Psoas muscle (tissue), 8 donors: ENCODE measurements at regions of chr2 and their contacts with region 1.

Region 1: GRCh38 chr2:36355151-36355889 is at the start of gene CRIM1:
- DNase-seq: peak; percentile 90 to 95
- ATAC-seq: peak; percentile 71 to 83 (median 78)
- H3K4me3 ChIP-seq: peak within 1 kb of the TSS; percentile 95
- H3K27ac ChIP-seq: peak within 1 kb of the TSS; percentile 92
- H3K4me1 ChIP-seq: peaks cover 27% of the 10 kb centered on the region
- H3K27me3 ChIP-seq: no peaks in the 10 kb centered on the region
- CTCF ChIP-seq: no peak
- total RNA-seq, gene CRIM1: 49.8 to 66.2 (median 56.3) TPM

Region 2: GRCh38 chr2:36013064-36013463 is 342.3 kb before region 1 on chr2:
- intact Hi-C with region 1: no loop called
- DNase-seq: no peak
- ATAC-seq: no peak
- H3K4me3 ChIP-seq: no peak overlapping the region
- H3K27ac ChIP-seq: no peak overlapping the region
- H3K4me1 ChIP-seq: no peaks in the 10 kb centered on the region
- H3K27me3 ChIP-seq: peaks cover 0 to 5% (median 0%) of the 10 kb centered on the region in 3 donors
- CTCF ChIP-seq: no peak

Region 3: DNA sequence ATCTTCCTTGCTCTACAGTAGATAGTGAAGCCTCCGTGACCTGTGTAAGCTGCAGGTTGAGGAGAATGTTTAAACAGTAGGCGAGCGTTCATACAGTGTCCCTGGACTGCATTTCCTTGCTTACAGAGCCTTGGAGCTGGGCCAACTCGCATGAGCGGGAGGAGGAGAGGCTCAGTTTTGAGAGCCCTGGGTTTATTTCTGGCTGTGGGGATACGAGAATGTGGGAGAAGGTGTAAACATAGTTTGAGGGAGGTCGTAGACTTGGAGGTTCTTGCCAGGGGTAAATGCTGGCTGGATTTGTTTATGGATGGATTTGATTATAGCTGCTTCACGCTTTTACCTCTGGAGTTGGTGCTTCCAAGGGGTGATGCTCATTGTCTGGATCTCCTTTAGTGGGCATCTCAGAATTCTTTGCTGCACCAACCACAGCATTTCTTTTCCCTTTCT is 21.0 kb after region 1 on chr2:
- intact Hi-C with region 1: no loop called
- DNase-seq: peak; percentile 65 to 82
- ATAC-seq: peak; percentile 46 to 67 (median 48)
- H3K4me3 ChIP-seq: no peak overlapping the region
- H3K27ac ChIP-seq: no peak overlapping the region
- H3K4me1 ChIP-seq: peaks cover 83% of the 10 kb centered on the region
- H3K27me3 ChIP-seq: no peaks in the 10 kb centered on the region
- CTCF ChIP-seq: no peak

Region 4: DNA sequence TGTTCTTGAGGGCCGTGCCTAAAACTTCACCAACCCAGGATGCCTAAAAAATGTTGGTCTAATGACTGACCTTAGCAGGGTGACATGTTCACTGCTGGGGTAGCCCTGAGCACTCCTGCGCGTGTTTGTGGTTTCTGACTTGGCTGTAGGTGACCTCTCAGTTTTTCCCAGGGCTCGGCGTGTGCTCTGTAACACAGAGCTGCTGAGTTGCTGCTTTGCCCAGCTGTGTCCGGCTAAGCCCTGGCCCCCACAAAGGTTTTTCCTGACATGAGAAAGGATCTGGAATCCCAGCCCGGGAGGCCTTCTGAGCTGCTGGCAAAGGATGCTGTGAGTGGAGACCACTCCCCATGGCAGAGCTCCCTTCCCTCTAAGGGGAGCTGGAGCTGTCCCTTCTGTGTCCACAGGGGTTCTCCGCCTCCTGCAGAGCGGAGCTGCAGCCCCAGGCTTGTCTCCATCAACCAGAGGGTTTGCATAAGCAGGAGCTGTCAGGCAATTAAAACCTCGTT is 52.9 kb after region 1 on chr2:
- intact Hi-C with region 1: loop called in 1 of 2 experiments (anchors 5 kb)
- DNase-seq: peak; percentile 14 to 42
- ATAC-seq: peak; percentile 62 to 79 (median 76)
- H3K4me3 ChIP-seq: peak overlapping the region; percentile 17
- H3K27ac ChIP-seq: peak overlapping the region; percentile 60
- H3K4me1 ChIP-seq: peaks cover 92% of the 10 kb centered on the region
- H3K27me3 ChIP-seq: no peaks in the 10 kb centered on the region
- CTCF ChIP-seq: no peak

Region 5: DNA sequence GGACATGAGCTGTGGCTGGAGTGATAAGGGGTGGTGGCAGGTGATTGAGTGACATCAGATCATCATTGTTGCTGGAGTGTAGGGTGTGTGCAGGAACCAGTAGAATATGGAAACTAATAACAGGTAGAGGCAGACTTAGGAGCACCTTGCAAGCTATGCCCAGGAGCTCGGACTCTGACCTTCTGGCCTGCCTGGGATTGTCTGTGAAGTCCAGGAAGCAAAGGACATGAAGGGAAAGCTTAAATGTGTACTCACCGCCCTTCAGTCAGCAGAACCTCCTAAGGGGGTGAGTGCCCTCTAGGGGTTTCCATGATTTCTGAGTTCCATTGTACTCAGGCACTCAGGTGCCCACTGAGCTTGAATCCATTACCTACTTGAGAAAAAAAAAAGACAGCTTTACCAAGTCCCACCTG is 104.4 kb after region 1 on chr2:
- intact Hi-C with region 1: loop called (anchors 5 kb)
- DNase-seq: no peak
- ATAC-seq: peak; percentile 47 to 74 (median 62)
- H3K4me3 ChIP-seq: no peak overlapping the region
- H3K27ac ChIP-seq: no peak overlapping the region
- H3K4me1 ChIP-seq: peaks cover 59% of the 10 kb centered on the region
- H3K27me3 ChIP-seq: no peaks in the 10 kb centered on the region
- CTCF ChIP-seq: peak; percentile 40

Region 6: DNA sequence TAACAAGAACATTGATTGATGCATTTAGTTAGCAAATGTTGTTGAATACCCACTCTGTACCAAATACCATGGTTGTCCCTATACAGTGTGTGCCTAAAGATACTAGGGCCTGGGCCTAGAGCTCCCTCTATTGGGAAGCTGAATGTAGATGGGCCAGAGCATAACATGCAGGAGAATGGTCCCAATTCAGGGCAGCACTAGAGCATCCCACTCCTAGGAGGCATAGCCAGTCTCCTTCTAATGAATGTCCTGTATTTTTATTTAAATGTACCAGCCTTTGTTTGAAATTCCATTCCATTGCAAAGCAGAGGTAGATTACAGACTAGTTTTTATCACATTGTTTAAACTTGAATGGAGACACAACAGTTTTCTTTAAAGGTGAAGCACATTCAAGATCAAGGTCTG is 152.1 kb after region 1 on chr2:
- intact Hi-C with region 1: loop called (anchors 5 kb)
- DNase-seq: no peak
- ATAC-seq: peak; percentile 48 to 85 (median 76)
- H3K4me3 ChIP-seq: no peak overlapping the region
- H3K27ac ChIP-seq: no peak overlapping the region
- H3K4me1 ChIP-seq: no peaks in the 10 kb centered on the region
- H3K27me3 ChIP-seq: no peaks in the 10 kb centered on the region
- CTCF ChIP-seq: peak; percentile 66

Region 7: DNA sequence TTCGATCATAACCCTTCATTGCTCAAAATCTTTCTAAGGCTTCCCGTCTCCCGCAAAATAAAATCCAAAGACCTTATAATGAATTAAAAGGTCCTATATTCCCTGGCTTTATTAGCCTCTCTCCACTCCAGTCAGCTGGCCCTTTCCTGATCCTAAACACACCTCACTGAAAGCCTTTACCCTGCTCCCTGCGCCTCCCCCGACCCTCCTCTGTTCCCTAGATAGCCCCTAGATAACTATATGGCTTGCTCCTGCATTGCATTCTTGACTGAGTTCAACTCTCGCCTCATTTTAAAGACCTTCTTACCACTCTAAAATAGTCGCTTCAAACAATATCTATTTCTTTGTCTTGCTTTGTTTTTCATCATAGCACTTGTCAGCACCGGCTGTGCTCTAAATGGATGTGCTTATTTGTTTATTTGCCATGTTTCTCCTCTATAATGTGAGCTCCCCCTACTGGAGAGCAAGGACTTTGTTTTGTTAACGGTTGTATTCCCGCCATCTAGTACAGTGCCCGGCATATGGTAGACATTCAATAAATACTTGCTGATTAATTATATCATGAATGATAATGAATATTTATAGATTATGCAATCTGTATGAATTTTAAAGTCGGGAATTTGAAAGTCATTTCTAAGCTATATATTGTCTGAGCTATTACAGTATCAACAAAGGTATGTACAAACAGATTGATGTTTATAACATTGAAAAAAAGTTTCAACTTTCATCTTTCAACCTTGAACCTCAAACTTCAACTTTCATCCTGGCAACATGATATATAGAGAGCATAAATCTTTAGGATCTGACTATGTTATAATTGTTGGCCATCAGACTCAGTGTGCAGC is 308.8 kb after region 1 on chr2:
- intact Hi-C with region 1: loop called (anchors 2 kb)
- DNase-seq: no peak
- ATAC-seq: peak; percentile 83 to 86 (median 85)
- H3K4me3 ChIP-seq: peak overlapping the region; percentile 37
- H3K27ac ChIP-seq: peak overlapping the region; percentile 62
- H3K4me1 ChIP-seq: peaks cover 15% of the 10 kb centered on the region
- H3K27me3 ChIP-seq: no peaks in the 10 kb centered on the region
- CTCF ChIP-seq: peak; percentile 88

Region 8: GRCh38 chr2:36785179-36785795 is 430.0 kb after region 1 on chr2:
- intact Hi-C with region 1: loop called in 1 of 2 experiments (anchors 5 kb)
- DNase-seq: peak; percentile 38 to 58
- ATAC-seq: peak in 3 of 4 donors; percentile 54 to 77 (median 67)
- H3K4me3 ChIP-seq: no peak overlapping the region
- H3K27ac ChIP-seq: no peak overlapping the region
- H3K4me1 ChIP-seq: no peaks in the 10 kb centered on the region
- H3K27me3 ChIP-seq: no peaks in the 10 kb centered on the region
- CTCF ChIP-seq: peak; percentile 95